Prostate gland (tissue), 2 donors: ENCODE measurements at regions of chr1 and their contacts with region 1.

Region 1: GRCh38 chr1:87084244-87084836 is 169.9 kb downstream of the HS2ST1 start:
- DNase-seq: no peak
- H3K4me3 ChIP-seq: no peak overlapping the region
- H3K27ac ChIP-seq: no peak overlapping the region
- H3K4me1 ChIP-seq: no peaks in the 10 kb centered on the region
- H3K27me3 ChIP-seq: no peaks in the 10 kb centered on the region
- CTCF ChIP-seq: peak in 3 of 4 experiments; percentile 44 to 67 (median 57)
- POLR2A ChIP-seq: no peak

Region 2: GRCh38 chr1:86499987-86500593 is 584.2 kb before region 1 on chr1:
- intact Hi-C with region 1: no loop called
- DNase-seq: no peak
- H3K4me3 ChIP-seq: no peak overlapping the region
- H3K27ac ChIP-seq: no peak overlapping the region
- H3K4me1 ChIP-seq: no peaks in the 10 kb centered on the region
- H3K27me3 ChIP-seq: no peaks in the 10 kb centered on the region
- CTCF ChIP-seq: peak; percentile 39 to 95 (median 68)
- POLR2A ChIP-seq: no peak

Region 3: GRCh38 chr1:86567878-86568277 is 516.5 kb before region 1 on chr1:
- intact Hi-C with region 1: no loop called
- DNase-seq: no peak
- H3K4me3 ChIP-seq: no peak overlapping the region
- H3K27ac ChIP-seq: no peak overlapping the region
- H3K4me1 ChIP-seq: no peaks in the 10 kb centered on the region
- H3K27me3 ChIP-seq: no peaks in the 10 kb centered on the region
- CTCF ChIP-seq: no peak
- POLR2A ChIP-seq: no peak

Region 4: GRCh38 chr1:86965012-86965826 is 119.1 kb before region 1 on chr1:
- intact Hi-C with region 1: loop called (anchors 10 kb)
- DNase-seq: no peak
- H3K4me3 ChIP-seq: no peak overlapping the region
- H3K27ac ChIP-seq: no peak overlapping the region
- H3K4me1 ChIP-seq: no peaks in the 10 kb centered on the region
- H3K27me3 ChIP-seq: no peaks in the 10 kb centered on the region
- CTCF ChIP-seq: peak in 3 of 4 experiments; percentile 44 to 52 (median 45)
- POLR2A ChIP-seq: no peak